SK-N-SH (cell line): ENCODE measurements at regions of chr13 and their contacts with region 1.

Region 1: GRCh38 chr13:51286135-51287002 is 53.1 kb upstream of the SERPINE3 start:
- DNase-seq: peak; percentile 80
- H3K4me3 ChIP-seq: no peak overlapping the region; a peak in 1 of 4 replicates
- H3K27ac ChIP-seq: no peak overlapping the region
- H3K4me1 ChIP-seq: no peaks in the 10 kb centered on the region; a peak in 1 of 4 replicates
- H3K27me3 ChIP-seq: no peaks in the 10 kb centered on the region
- CTCF ChIP-seq: peak; percentile 98
- EP300 ChIP-seq: no peak
- RAD21 ChIP-seq: peak; percentile 95

Region 2: GRCh38 chr13:50635504-50635903 is 650.9 kb before region 1 on chr13:
- CTCF ChIA-PET with region 1: no interaction called
- POLR2A ChIA-PET with region 1: no interaction called
- DNase-seq: no peak
- H3K4me3 ChIP-seq: no peak overlapping the region
- H3K27ac ChIP-seq: no peak overlapping the region
- H3K4me1 ChIP-seq: no peaks in the 10 kb centered on the region; a peak in 2 of 4 replicates
- H3K27me3 ChIP-seq: no peaks in the 10 kb centered on the region
- CTCF ChIP-seq: no peak
- EP300 ChIP-seq: no peak
- RAD21 ChIP-seq: no peak

Region 3: DNA sequence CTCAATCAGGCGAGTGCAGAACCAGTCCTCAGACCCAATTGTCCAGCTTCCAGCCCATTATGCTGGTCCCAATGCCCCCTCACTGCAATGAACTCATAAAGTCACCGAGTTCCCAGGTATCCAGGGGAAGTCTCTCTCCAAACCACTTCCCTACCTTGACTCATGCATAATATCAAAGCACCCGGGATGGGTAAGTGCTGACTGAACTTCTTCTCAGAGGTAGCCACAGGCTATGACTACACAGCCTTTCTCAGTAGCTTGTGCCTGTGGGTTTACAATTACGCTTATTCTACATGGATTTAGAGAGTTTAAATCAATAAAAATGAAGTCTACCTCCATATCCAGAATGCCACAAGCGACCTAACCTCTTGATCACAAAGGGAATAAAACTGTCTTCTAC is 173.6 kb before region 1 on chr13:
- CTCF ChIA-PET with region 1: interaction called, 11 read pairs
- POLR2A ChIA-PET with region 1: no interaction called
- DNase-seq: no peak
- H3K4me3 ChIP-seq: no peak overlapping the region
- H3K27ac ChIP-seq: no peak overlapping the region
- H3K4me1 ChIP-seq: no peaks in the 10 kb centered on the region
- H3K27me3 ChIP-seq: no peaks in the 10 kb centered on the region; the same call in 1 of the 2 replicates
- CTCF ChIP-seq: no peak
- EP300 ChIP-seq: no peak
- RAD21 ChIP-seq: no peak

Region 4: DNA sequence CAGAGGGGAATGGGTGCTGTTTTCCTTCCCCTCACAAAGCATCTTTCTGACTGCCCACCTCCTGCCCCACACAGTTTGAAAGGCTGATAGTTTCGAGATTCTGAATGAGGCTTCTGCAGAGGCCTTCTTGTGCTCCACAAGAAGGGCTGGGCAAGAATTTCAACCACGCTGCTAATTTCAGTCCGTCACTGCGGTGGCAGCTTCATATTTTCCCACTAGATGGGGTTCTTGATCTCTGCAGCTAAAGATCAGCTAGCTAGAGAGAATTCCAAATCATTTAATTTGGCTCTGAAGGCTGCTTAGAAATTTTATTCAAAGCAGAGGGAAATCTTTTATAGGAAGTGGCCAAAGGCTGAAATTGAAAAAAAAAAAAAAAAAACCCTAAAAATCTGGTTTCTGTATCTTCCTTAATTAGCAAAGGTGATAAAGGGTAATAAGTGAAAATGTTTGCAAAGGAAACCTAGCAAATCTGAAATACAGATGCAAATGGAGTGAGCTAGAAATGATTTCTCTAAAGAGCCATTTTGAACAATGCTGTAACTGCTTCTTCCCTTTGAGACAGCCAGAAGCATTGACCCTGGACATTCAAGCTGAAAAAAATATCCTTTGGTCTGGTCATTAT is 137.3 kb before region 1 on chr13:
- CTCF ChIA-PET with region 1: interaction called, 257 read pairs
- POLR2A ChIA-PET with region 1: interaction called, 3 read pairs
- DNase-seq: peak; percentile 69
- H3K4me3 ChIP-seq: no peak overlapping the region; a peak in 1 of 4 replicates
- H3K27ac ChIP-seq: no peak overlapping the region
- H3K4me1 ChIP-seq: no peaks in the 10 kb centered on the region; a peak in 1 of 4 replicates
- H3K27me3 ChIP-seq: no peaks in the 10 kb centered on the region; the same call in none of the 2 replicates
- CTCF ChIP-seq: peak; percentile 72
- EP300 ChIP-seq: no peak
- RAD21 ChIP-seq: peak; percentile 98

Region 5: GRCh38 chr13:51222037-51222685 is 64.2 kb before region 1 on chr13 and contains the start of gene FAM124A:
- CTCF ChIA-PET with region 1: interaction called, 53 read pairs
- POLR2A ChIA-PET with region 1: no interaction called
- DNase-seq: peak; percentile 89
- H3K4me3 ChIP-seq: peak within 1 kb of the TSS; percentile 70 to 79
- H3K27ac ChIP-seq: no peak within 1 kb of the TSS
- H3K4me1 ChIP-seq: peaks cover 0 to 20% of the 10 kb centered on the region in 2 experiments; a peak in 2 of 4 replicates
- H3K27me3 ChIP-seq: 0 out of 2 replicates have a peak, but pooled peaks cover 7% of the 10 kb centered on the region
- CTCF ChIP-seq: no peak
- EP300 ChIP-seq: no peak
- RAD21 ChIP-seq: peak; percentile 15; the same call in 1 of the 2 replicates
- polyA plus RNA-seq, gene FAM124A: 1.5 and 2.0 TPM in 2 replicates

Region 6: GRCh38 chr13:51246418-51247277 is 39.7 kb before region 1 on chr13:
- CTCF ChIA-PET with region 1: interaction called, 31 read pairs
- POLR2A ChIA-PET with region 1: interaction called, 5 read pairs
- DNase-seq: peak; percentile 80
- H3K4me3 ChIP-seq: peak overlapping the region in 1 of 2 experiments; percentile 19; a peak in 1 of 4 replicates
- H3K27ac ChIP-seq: peak overlapping the region; percentile 15 to 85; a peak in 3 of 4 replicates
- H3K4me1 ChIP-seq: peaks cover 0 to 26% of the 10 kb centered on the region in 2 experiments; a peak in 2 of 4 replicates
- H3K27me3 ChIP-seq: no peaks in the 10 kb centered on the region
- CTCF ChIP-seq: no peak
- EP300 ChIP-seq: no peak
- RAD21 ChIP-seq: no peak

Region 7: DNA sequence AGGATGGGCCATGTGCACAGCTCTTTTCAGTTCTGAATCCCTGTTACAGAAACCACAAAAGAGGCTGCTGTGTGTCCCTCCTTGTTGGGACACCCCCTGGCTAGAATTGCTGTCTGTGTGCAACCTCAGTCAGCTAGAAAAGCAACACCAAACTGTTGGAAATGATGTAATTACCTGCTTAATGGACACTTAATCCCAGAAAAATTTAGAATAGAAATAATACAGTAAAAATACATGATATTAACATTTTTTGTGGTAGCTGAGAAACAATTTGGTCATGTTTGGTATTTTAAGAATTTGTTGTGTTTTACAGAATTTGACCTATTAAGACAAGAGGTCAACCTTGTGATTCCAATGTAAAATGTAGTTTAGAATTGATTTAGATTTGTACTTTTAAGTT is 17.3 kb before region 1 on chr13:
- CTCF ChIA-PET with region 1: interaction called, 32 read pairs
- POLR2A ChIA-PET with region 1: no interaction called
- DNase-seq: no peak
- H3K4me3 ChIP-seq: no peak overlapping the region
- H3K27ac ChIP-seq: peak overlapping the region in 1 of 2 experiments; percentile 55; a peak in 1 of 4 replicates
- H3K4me1 ChIP-seq: peaks cover 0 to 5% of the 10 kb centered on the region in 2 experiments; a peak in 1 of 4 replicates
- H3K27me3 ChIP-seq: no peaks in the 10 kb centered on the region
- CTCF ChIP-seq: no peak
- EP300 ChIP-seq: peak in 1 of 2 experiments; percentile 45; a peak in 1 of 4 replicates
- RAD21 ChIP-seq: no peak

Region 8: DNA sequence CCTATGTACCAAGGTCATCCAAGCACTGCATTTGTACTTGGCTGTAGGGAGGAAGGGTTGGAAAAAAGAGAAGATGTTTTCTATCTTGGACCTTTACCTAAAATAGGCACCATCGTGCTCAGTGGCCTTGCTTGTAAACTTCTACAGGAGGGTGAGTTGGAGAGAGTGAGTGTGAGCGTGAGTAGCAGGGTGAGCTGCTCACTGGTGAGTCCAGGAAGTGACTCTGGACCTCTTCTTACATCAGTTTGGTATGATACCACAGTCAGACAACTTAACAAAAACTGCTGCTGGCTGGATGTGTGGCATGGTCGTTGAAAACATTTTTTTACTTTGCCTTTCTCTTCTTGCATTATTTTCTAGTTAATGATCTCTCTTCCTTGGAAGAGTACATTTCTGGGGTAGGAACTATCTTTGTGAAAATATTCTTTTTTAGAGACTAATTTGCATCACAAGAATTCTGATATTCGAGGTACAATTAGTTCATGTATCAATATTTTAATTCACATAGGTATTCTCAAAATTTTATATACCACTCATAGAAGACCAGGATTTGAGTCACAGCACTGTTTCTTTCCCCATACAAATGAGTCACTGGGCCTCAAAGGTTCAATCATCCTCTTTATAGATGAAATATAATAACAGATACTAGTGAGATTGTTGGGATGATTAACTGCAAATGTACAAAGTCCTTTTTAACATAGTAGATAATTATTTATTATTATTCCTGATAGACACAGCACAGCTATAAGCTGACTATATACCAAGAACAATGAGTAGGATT is 53.8 kb after region 1 on chr13:
- CTCF ChIA-PET with region 1: interaction called, 10 read pairs
- POLR2A ChIA-PET with region 1: no interaction called
- DNase-seq: no peak
- H3K4me3 ChIP-seq: no peak overlapping the region
- H3K27ac ChIP-seq: no peak overlapping the region
- H3K4me1 ChIP-seq: peaks cover 4 to 10% of the 10 kb centered on the region in 2 experiments; a peak in 1 of 4 replicates
- H3K27me3 ChIP-seq: no peaks in the 10 kb centered on the region
- CTCF ChIP-seq: no peak
- EP300 ChIP-seq: no peak
- RAD21 ChIP-seq: no peak

Region 9: GRCh38 chr13:51465124-51465523 is 178.8 kb after region 1 on chr13:
- CTCF ChIA-PET with region 1: no interaction called
- POLR2A ChIA-PET with region 1: no interaction called
- DNase-seq: no peak
- H3K4me3 ChIP-seq: no peak overlapping the region
- H3K27ac ChIP-seq: no peak overlapping the region
- H3K4me1 ChIP-seq: no peaks in the 10 kb centered on the region
- H3K27me3 ChIP-seq: no peaks in the 10 kb centered on the region
- CTCF ChIP-seq: no peak
- EP300 ChIP-seq: no peak
- RAD21 ChIP-seq: no peak

Region 10: GRCh38 chr13:51475727-51476501 is 189.5 kb after region 1 on chr13:
- CTCF ChIA-PET with region 1: no interaction called
- POLR2A ChIA-PET with region 1: no interaction called
- DNase-seq: no peak
- H3K4me3 ChIP-seq: no peak overlapping the region
- H3K27ac ChIP-seq: no peak overlapping the region
- H3K4me1 ChIP-seq: peaks cover 0 to 9% of the 10 kb centered on the region in 2 experiments; a peak in 1 of 4 replicates
- H3K27me3 ChIP-seq: no peaks in the 10 kb centered on the region
- CTCF ChIP-seq: no peak
- EP300 ChIP-seq: no peak
- RAD21 ChIP-seq: no peak

Region 11: GRCh38 chr13:51645154-51645650 is 358.8 kb after region 1 on chr13:
- CTCF ChIA-PET with region 1: no interaction called
- POLR2A ChIA-PET with region 1: no interaction called
- DNase-seq: no peak
- H3K4me3 ChIP-seq: no peak overlapping the region
- H3K27ac ChIP-seq: peak overlapping the region; percentile 90 to 96; a peak in 3 of 4 replicates
- H3K4me1 ChIP-seq: peaks cover 18 to 35% of the 10 kb centered on the region in 2 experiments
- H3K27me3 ChIP-seq: no peaks in the 10 kb centered on the region
- CTCF ChIP-seq: no peak
- EP300 ChIP-seq: no peak
- RAD21 ChIP-seq: no peak